ENCODE measurements at regions of chr1 and their contacts with region 1.

Region 1: GRCh38 chr1:92831762-92832536 is at the start of gene RPL5:
- DNase-seq: peak; percentile 93 to 97
- H3K4me3 ChIP-seq: peak within 1 kb of the TSS; percentile 85
- H3K27ac ChIP-seq: peak within 1 kb of the TSS; percentile 92
- H3K4me1 ChIP-seq: peaks cover 42% of the 10 kb centered on the region
- H3K27me3 ChIP-seq: no peaks in the 10 kb centered on the region
- CTCF ChIP-seq: peak; percentile 99
- total RNA-seq, gene RPL5: 1,021 and 1,050 TPM in 2 replicates

Region 2: DNA sequence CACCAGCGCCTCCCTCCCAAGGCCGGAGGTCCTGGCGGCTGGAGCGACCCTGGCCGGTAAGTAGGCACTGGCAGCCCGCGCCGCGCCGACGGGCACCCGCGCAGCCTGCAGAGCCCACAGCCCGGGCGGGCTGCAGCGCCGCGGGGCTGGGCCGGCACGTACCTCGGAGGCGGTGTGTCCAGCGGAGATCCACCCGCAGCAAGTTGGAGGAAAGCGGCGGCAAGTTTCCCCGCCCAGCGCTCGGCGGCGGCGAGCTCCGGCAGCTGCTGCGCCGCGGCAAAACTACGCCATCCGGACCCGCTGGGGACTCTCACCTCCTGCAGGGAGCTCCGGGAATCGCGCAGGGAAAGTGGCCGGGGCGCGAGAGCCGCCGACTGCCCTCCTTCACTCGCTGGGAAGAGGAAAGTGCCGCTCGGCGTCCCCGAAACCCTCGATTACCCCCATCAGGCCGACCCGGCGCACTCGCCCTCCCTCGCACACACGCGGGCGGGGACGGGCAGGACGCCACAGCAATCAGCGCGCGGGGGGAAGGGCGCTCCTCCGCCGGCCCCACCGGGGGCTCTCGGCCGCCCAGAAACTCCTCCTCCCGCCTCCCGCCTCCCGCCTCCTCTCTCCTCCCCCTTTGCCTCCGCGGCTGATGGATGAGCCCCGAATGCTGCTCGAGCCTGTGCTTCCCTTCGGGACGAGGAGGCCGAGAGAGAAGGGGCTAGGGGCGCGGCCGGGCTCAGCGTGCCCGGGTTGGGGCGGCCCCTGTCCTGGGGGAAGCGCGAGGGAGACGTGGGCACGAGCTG is 946.0 kb before region 1 on chr1 and contains the start of gene TGFBR3:
- CTCF ChIA-PET with region 1: no interaction called
- POLR2A ChIA-PET with region 1: no interaction called
- intact Hi-C with region 1: loop called (anchors 10 kb)
- DNase-seq: peak; percentile 77 to 80
- H3K4me3 ChIP-seq: peak within 1 kb of the TSS; percentile 87
- H3K27ac ChIP-seq: peak within 1 kb of the TSS; percentile 30; the same call in 1 of the 2 replicates
- H3K4me1 ChIP-seq: peaks cover 42% of the 10 kb centered on the region
- H3K27me3 ChIP-seq: no peaks in the 10 kb centered on the region
- CTCF ChIP-seq: peak; percentile 60
- total RNA-seq, gene TGFBR3: 1.6 and 2.5 TPM in 2 replicates

Region 3: DNA sequence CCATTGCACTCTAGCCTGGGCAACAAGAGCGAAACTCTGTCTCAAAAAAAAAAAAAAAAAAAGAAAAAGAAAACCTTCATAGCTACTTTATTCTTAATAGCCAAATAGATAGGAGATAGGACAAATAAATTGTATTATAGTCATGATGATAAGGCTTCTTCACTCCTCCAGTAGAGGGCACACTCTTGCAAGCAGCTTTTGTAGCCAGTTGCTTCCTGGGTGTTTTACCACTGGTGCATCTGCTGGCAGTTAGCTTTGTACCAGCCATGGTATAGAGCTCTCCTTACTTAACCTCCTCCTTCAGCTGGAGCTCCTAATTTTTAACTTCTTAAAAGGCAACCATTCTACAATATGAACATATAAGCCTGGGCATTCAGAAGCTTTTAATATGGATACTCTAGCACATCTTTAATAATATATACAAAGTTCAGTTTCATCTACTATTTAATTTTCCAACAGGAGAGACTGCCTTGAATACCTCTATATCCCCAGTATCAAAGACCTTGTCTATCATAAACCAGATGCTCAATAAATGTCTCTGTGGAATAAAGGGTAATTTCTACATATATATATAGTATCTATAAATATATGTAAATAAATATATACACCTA is 82.8 kb before region 1 on chr1:
- CTCF ChIA-PET with region 1: interaction called, 5 read pairs
- POLR2A ChIA-PET with region 1: no interaction called
- intact Hi-C with region 1: loop called (anchors 1 kb)
- DNase-seq: peak; percentile 21 to 59
- H3K4me3 ChIP-seq: no peak overlapping the region
- H3K27ac ChIP-seq: no peak overlapping the region
- H3K4me1 ChIP-seq: peaks cover 11% of the 10 kb centered on the region
- H3K27me3 ChIP-seq: no peaks in the 10 kb centered on the region
- CTCF ChIP-seq: peak; percentile 86

Region 4: DNA sequence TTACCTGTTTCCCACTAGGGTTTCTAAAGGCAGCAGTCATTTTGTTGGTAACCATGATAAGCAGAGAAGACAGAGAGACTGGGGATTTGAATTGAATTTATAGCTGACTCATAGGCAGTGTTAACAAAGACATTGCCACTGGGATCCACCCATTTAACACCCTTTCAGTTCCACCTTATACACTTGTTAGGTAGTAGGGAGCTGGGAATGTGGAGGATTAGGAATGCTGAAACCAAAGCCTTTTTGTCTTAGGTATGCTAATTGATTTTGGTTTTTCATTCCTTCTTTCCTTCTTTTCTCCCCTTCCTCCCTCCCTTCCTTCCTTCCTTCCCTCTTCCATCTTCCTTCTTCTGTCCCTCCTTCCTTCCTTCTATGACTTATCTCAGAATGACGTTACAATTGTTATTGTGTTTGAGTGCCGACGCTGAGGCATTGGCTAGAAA is 39.6 kb before region 1 on chr1:
- CTCF ChIA-PET with region 1: no interaction called
- POLR2A ChIA-PET with region 1: interaction called, 7 read pairs
- intact Hi-C with region 1: loop called (anchors 2 kb)
- DNase-seq: no peak
- H3K4me3 ChIP-seq: no peak overlapping the region
- H3K27ac ChIP-seq: no peak overlapping the region
- H3K4me1 ChIP-seq: peaks cover 10% of the 10 kb centered on the region; the same call in 1 of the 2 replicates
- H3K27me3 ChIP-seq: no peaks in the 10 kb centered on the region
- CTCF ChIP-seq: no peak

Region 5: GRCh38 chr1:92951141-92951582 is 119.2 kb after region 1 on chr1:
- CTCF ChIA-PET with region 1: no interaction called
- POLR2A ChIA-PET with region 1: interaction called, 12 read pairs
- intact Hi-C with region 1: no loop called
- DNase-seq: peak; percentile 22 to 79
- H3K4me3 ChIP-seq: peak overlapping the region; percentile 22; the same call in 1 of the 2 replicates
- H3K27ac ChIP-seq: peak overlapping the region; percentile 86
- H3K4me1 ChIP-seq: peaks cover 26% of the 10 kb centered on the region
- H3K27me3 ChIP-seq: no peaks in the 10 kb centered on the region
- CTCF ChIP-seq: no peak

Measured in PC-9 (cell line).